Cardiac septum (tissue), 1 donor: ENCODE measurements at regions of chr5 and their contacts with region 1.

Region 1: GRCh38 chr5:168219515-168220410 is 71.7 kb upstream of the WWC1 start:
- DNase-seq: no peak

Region 2: GRCh38 chr5:167723254-167723871 is 496.4 kb before region 1 on chr5:
- intact Hi-C with region 1: loop called (anchors 5 kb)
- DNase-seq: peak; percentile 84

Region 3: GRCh38 chr5:167969998-167970397 is 249.8 kb before region 1 on chr5:
- intact Hi-C with region 1: no loop called
- DNase-seq: no peak

Region 4: GRCh38 chr5:168114444-168115017 is 105.2 kb before region 1 on chr5:
- intact Hi-C with region 1: loop called (anchors 5 kb)
- DNase-seq: no peak